Naive thymus-derived CD4-positive, alpha-beta T cell (primary cell): ENCODE measurements at regions of chr15 and their contacts with region 1.

Region 1: DNA sequence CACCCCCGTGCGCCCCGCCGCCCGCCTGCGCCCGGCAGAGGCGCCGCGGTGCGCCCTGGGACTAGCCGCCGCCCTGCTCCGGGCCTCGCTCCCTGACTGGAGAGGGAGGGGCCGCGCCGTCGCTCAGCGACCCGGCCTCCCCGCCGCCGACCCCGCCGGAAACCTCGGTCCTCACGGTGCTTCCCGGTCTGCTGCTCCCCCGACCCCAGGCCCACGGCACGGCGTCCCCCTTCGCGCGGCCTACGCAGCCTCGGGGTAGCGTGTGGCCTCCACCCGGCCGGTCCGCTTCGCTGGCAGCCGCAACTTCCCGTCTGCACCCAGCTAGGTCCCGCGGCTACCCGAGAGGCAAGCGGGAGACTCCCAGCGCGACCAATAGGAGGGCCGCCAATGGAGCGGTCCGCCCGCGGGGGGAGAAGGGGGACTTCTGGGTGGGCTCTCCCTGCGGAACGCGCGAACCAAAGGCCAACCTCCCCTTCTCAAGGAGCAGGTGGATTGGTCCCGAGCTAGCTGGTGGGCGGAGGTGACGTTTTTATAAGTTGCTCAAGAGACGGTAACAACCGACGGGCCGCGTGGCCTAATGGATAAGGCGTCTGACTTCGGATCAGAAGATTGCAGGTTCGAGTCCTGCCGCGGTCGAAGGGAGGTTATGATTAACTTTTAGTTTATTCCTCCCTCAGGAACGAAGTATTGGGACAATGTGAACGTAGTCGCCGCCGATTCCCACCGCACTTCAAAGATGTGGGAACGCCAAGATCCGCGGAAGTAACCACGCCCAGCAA is at the start of gene POLG:
- DNase-seq: peak; percentile 92 to 100 (median 99)
- ATAC-seq: peak; percentile 95
- H3K4me3 ChIP-seq: peak within 1 kb of the TSS; percentile 91
- H3K4me3 Mint-ChIP-seq: peak within 1 kb of the TSS; percentile 88 to 98 (median 95)
- H3K27ac ChIP-seq: peak within 1 kb of the TSS; percentile 82
- H3K27ac Mint-ChIP-seq: peak within 1 kb of the TSS; percentile 93 to 100 (median 100)
- H3K4me1 ChIP-seq: peaks cover 44 to 48% of the 10 kb centered on the region in 2 donors
- H3K4me1 Mint-ChIP-seq: peaks cover 28 to 55% (median 51%) of the 10 kb centered on the region in 7 donors
- H3K27me3 ChIP-seq: no peaks in the 10 kb centered on the region
- H3K27me3 Mint-ChIP-seq: peaks cover 0 to 9% (median 4%) of the 10 kb centered on the region in 5 donors
- total RNA-seq, gene POLG: 121 to 136 (median 129) TPM

Region 2: DNA sequence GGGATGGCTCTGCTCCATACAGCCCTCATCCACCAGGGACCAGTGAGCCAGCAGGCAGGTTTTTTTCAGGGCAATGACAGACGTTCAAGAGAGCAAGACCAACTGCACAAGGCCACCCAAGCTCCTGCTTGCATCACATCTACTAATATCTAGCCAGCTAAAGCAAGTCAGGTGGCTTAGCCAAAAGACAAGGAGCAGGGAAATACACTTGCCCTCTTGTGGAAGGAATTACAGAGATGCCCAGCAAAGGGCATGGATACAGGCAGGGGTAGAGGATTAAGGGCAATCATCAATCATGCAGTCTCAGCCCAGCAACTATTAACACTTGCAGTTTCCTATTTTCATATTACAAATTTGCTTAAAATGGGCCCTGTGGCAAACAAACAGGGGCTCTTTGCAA is 996.7 kb before region 1 on chr15:
- CTCF ChIA-PET with region 1: no interaction called
- POLR2A ChIA-PET with region 1: no interaction called
- intact Hi-C with region 1: no loop called
- DNase-seq: no peak
- ATAC-seq: no peak
- H3K4me3 ChIP-seq: no peak overlapping the region
- H3K4me3 Mint-ChIP-seq: no peak overlapping the region
- H3K27ac ChIP-seq: no peak overlapping the region
- H3K27ac Mint-ChIP-seq: no peak overlapping the region
- H3K4me1 ChIP-seq: no peaks in the 10 kb centered on the region
- H3K4me1 Mint-ChIP-seq: no peaks in the 10 kb centered on the region
- H3K27me3 ChIP-seq: no peaks in the 10 kb centered on the region
- H3K27me3 Mint-ChIP-seq: peaks cover 7 to 37% (median 19%) of the 10 kb centered on the region in 5 donors

Region 3: DNA sequence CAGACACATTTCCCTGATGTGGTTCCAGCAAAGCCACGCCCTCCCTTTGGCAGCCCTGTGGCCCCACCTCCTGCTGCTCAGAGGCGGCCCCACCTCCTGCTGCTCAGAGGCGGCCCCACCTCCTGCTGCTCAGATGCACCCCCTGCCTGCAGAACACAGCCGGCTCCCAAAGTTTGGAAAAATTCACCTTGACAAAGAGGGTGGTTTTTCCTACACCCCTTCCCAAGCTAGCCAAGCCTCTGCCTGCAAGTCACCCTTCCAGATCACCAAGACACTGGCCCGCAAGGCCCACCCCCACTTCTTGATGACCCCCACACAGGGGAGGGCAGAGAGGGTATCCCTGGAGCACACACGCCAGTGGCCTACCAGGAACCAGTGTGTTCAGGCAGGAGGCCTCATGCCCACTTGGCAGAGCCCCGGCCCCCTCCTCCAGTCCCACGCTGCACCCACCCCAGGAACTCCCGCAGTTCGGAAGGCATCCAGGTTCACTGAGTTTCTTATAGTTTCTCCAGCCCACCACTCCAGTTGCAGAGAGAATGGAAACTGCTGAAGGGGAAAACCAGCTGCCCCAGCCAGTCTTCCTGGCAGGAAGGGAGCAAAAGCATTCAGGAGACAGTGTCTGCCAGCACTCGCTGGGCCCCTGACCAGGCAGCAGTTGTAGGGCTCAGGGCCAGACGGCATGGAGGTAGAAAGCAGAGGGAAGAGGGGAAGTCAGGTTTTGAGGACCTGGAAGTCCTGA is 437.1 kb before region 1 on chr15:
- CTCF ChIA-PET with region 1: no interaction called
- POLR2A ChIA-PET with region 1: no interaction called
- intact Hi-C with region 1: loop called in 1 of 2 experiments (anchors 2 kb)
- DNase-seq: peak in 8 of 9 donors; percentile 74 to 85 (median 80)
- ATAC-seq: peak; percentile 75
- H3K4me3 ChIP-seq: peak overlapping the region; percentile 32
- H3K4me3 Mint-ChIP-seq: peak overlapping the region; percentile 24 to 83 (median 60)
- H3K27ac ChIP-seq: no peak overlapping the region
- H3K27ac Mint-ChIP-seq: peak overlapping the region in 8 of 9 donors; percentile 20 to 97 (median 80)
- H3K4me1 ChIP-seq: peaks cover 27 to 38% of the 10 kb centered on the region in 2 donors
- H3K4me1 Mint-ChIP-seq: peaks cover 28 to 62% (median 51%) of the 10 kb centered on the region in 7 donors
- H3K27me3 ChIP-seq: no peaks in the 10 kb centered on the region
- H3K27me3 Mint-ChIP-seq: no peaks in the 10 kb centered on the region

Region 4: GRCh38 chr15:89087830-89088604 is 246.7 kb before region 1 on chr15 and contains the start of gene ABHD2:
- CTCF ChIA-PET with region 1: no interaction called
- POLR2A ChIA-PET with region 1: interaction called, 4 read pairs
- intact Hi-C with region 1: loop called (anchors 1 to 10 kb)
- DNase-seq: peak; percentile 93 to 99 (median 97)
- ATAC-seq: peak; percentile 97
- H3K4me3 ChIP-seq: peak within 1 kb of the TSS; percentile 78
- H3K4me3 Mint-ChIP-seq: peak within 1 kb of the TSS in 1 of 10 donors; percentile 8
- H3K27ac ChIP-seq: peak within 1 kb of the TSS; percentile 81
- H3K27ac Mint-ChIP-seq: peak within 1 kb of the TSS in 7 of 9 donors; percentile 90 to 100 (median 97)
- H3K4me1 ChIP-seq: peaks cover 26 to 29% of the 10 kb centered on the region in 2 donors
- H3K4me1 Mint-ChIP-seq: peaks cover 30 to 43% (median 32%) of the 10 kb centered on the region in 7 donors
- H3K27me3 ChIP-seq: no peaks in the 10 kb centered on the region
- H3K27me3 Mint-ChIP-seq: no peaks in the 10 kb centered on the region
- total RNA-seq, gene ABHD2: 43.6 to 85.0 (median 67.7) TPM

Region 5: DNA sequence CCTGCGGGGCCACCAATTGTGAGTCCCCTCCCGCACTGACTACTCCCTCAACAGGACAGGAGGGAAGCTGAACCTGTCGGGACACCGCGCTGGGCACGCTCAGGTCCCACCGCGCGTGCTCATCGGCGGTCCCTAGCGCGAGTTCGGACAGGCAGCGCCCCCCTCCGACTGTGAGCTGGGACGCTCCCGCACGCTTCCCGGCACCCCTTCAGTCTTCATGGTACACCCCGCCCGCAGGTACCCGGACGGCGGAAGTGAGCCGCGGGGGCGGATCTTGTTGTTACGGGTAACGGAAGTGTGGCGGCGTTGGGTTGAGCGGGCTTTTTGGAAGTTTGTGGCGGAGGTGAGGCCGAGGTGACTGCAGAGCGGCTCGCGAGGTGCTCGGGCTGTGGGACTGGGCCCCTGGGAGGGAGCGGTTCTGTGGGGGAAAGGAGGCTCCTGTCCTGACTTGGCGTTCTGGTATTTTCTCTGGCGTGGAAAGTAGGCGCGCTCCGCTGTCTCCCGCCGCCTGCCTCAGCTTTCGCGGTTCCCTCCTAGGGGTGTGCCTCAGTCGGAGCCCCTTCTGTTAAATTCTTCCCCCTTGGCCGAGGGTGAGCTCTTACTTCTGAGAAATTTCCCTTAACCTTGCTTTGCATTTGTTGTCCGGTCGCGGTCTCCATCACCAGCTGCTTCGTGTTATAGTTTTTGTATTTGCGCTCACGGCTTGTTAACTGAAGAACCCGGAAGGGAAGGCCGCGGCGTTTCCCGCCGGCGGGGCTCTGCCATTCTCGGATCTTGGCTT is 90.8 kb before region 1 on chr15 and contains the start of gene FANCI:
- CTCF ChIA-PET with region 1: no interaction called
- POLR2A ChIA-PET with region 1: interaction called, 4 read pairs
- intact Hi-C with region 1: loop called (anchors 1 kb)
- DNase-seq: peak; percentile 89 to 97 (median 94)
- ATAC-seq: peak; percentile 100
- H3K4me3 ChIP-seq: peak within 1 kb of the TSS; percentile 79
- H3K4me3 Mint-ChIP-seq: peak within 1 kb of the TSS; percentile 86 to 98 (median 94)
- H3K27ac ChIP-seq: peak within 1 kb of the TSS; percentile 65
- H3K27ac Mint-ChIP-seq: peak within 1 kb of the TSS; percentile 78 to 96 (median 84)
- H3K4me1 ChIP-seq: peaks cover 6 to 13% of the 10 kb centered on the region in 2 donors
- H3K4me1 Mint-ChIP-seq: peaks cover 20 to 40% (median 26%) of the 10 kb centered on the region in 7 donors
- H3K27me3 ChIP-seq: no peaks in the 10 kb centered on the region
- H3K27me3 Mint-ChIP-seq: peaks cover 0 to 8% (median 0%) of the 10 kb centered on the region in 5 donors
- total RNA-seq, gene FANCI: 8.0 to 132 (median 9.7) TPM

Region 6: GRCh38 chr15:89378296-89379151 is 43.8 kb after region 1 on chr15:
- CTCF ChIA-PET with region 1: no interaction called
- POLR2A ChIA-PET with region 1: no interaction called
- intact Hi-C with region 1: loop called in 1 of 2 experiments (anchors 2 kb)
- DNase-seq: peak in 3 of 9 donors; percentile 10 to 21 (median 14)
- ATAC-seq: peak; percentile 53
- H3K4me3 ChIP-seq: peak overlapping the region; percentile 27
- H3K4me3 Mint-ChIP-seq: peak overlapping the region in 9 of 10 donors; percentile 69 to 84 (median 79)
- H3K27ac ChIP-seq: no peak overlapping the region
- H3K27ac Mint-ChIP-seq: peak overlapping the region in 3 of 9 donors; percentile 45 to 80 (median 69)
- H3K4me1 ChIP-seq: no peaks in the 10 kb centered on the region
- H3K4me1 Mint-ChIP-seq: peaks cover 0 to 20% (median 8%) of the 10 kb centered on the region in 7 donors
- H3K27me3 ChIP-seq: peaks cover 6 to 10% of the 10 kb centered on the region in 2 donors
- H3K27me3 Mint-ChIP-seq: peaks cover 73 to 95% (median 76%) of the 10 kb centered on the region in 5 donors

Region 7: GRCh38 chr15:89893696-89894455 is 559.2 kb after region 1 on chr15 and contains the start of gene AP3S2:
- CTCF ChIA-PET with region 1: no interaction called
- POLR2A ChIA-PET with region 1: no interaction called
- intact Hi-C with region 1: loop called (anchors 10 kb)
- DNase-seq: peak; percentile 79 to 90 (median 86)
- ATAC-seq: peak; percentile 97
- H3K4me3 ChIP-seq: peak within 1 kb of the TSS; percentile 88
- H3K4me3 Mint-ChIP-seq: peak within 1 kb of the TSS; percentile 89 to 99 (median 96)
- H3K27ac ChIP-seq: peak within 1 kb of the TSS; percentile 81
- H3K27ac Mint-ChIP-seq: peak within 1 kb of the TSS; percentile 91 to 98 (median 95)
- H3K4me1 ChIP-seq: peaks cover 6 to 14% of the 10 kb centered on the region in 2 donors
- H3K4me1 Mint-ChIP-seq: peaks cover 17 to 46% (median 36%) of the 10 kb centered on the region in 7 donors
- H3K27me3 ChIP-seq: no peaks in the 10 kb centered on the region
- H3K27me3 Mint-ChIP-seq: no peaks in the 10 kb centered on the region
- total RNA-seq, gene AP3S2: 24.3 to 31.7 (median 28.4) TPM